ENCODE measurements at regions of chr17 and their contacts with region 1.

Region 1: DNA sequence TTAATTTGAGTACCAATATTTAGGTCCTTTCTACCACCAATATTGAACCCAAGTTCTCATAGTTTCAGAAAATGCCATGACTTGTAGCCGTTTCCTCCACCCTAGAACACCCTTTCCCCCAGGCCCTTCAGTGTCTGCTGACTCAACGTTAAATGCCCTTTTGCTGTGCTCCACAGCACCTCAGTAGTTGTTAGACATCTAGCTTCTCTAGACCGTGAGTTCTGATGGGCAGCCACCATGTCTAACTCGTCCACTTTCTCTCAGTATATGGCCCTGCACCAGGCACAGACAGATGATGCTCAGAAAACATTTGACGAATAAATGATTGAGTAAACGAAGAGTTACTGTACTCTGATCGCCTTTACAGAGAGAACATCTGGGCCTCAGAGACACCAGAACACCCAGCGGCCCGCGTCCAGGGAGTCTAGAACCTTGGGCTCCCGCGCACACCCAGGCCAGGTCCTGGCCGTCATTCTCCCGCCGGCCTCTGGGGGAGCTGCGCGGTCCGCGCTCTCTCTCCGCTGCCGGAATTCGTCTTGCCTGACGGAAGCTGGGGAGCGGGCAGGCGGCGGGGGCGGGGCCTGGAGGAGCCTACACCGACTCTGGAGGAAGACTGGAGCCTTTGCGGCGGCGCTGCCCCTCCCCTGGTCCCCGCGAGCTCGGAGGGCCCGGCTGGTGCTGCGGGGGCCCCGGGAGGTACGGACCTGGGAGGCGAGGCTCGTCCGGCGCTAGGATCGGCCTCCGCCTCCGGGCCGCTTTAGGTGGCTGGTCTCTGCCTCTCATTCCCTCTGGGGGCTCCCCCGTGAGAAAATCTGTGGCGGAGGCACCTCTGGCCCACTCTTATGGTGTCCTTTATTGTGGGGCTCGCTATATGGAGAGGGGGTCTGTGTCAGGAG is at the start of gene NKIRAS2:
- DNase-seq: peak; percentile 98
- ATAC-seq: peak; percentile 80
- total RNA-seq, gene NKIRAS2: 47.1 TPM

Region 2: GRCh38 chr17:41966463-41967140 is 53.2 kb before region 1 on chr17 and contains the start of gene CNP:
- intact Hi-C with region 1: loop called (anchors 2 kb)
- DNase-seq: peak; percentile 96
- ATAC-seq: peak; percentile 96
- total RNA-seq, gene CNP: 28.2 TPM

Region 3: DNA sequence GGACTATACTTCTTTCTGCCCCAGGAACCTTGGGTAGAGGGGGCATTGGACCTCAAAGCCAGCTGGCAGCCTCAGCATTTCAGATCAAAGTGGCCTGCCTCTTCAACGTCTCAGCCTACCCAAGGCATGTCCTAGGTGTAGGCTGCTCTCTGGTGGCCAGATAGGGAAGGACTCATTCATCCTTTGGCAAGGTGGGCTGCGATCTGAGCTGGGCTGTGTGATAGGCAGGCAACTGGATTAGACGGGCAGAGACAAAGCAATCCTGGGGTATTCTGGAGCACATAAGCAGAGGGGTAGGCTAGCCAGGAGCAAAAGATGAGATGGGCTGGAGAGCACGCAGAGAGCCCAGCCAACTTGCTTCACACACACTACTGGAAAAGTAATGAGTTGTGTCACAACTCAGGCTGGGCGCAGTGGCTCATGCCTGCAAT is 507.5 kb after region 1 on chr17:
- intact Hi-C with region 1: loop called (anchors 10 kb)
- DNase-seq: no peak
- ATAC-seq: peak; percentile 82